ENCODE measurements at regions of chr5 and their contacts with region 1.

Region 1: GRCh38 chr5:80921026-80921425 is 39.1 kb upstream of the RASGRF2 start:
- DNase-seq: peak; percentile 35
- H3K4me3 Mint-ChIP-seq: no peak overlapping the region
- H3K27ac Mint-ChIP-seq: peak overlapping the region; percentile 22
- H3K4me1 Mint-ChIP-seq: peaks cover 29% of the 10 kb centered on the region
- H3K27me3 Mint-ChIP-seq: no peaks in the 10 kb centered on the region
- CTCF ChIP-seq: no peak

Region 2: GRCh38 chr5:80852331-80853245 is 68.4 kb before region 1 on chr5:
- CTCF ChIA-PET with region 1: no interaction called
- intact Hi-C with region 1: loop called (anchors 2 kb)
- DNase-seq: no peak
- H3K4me3 Mint-ChIP-seq: no peak overlapping the region
- H3K27ac Mint-ChIP-seq: peak overlapping the region; percentile 78
- H3K4me1 Mint-ChIP-seq: peaks cover 12% of the 10 kb centered on the region
- H3K27me3 Mint-ChIP-seq: no peaks in the 10 kb centered on the region
- CTCF ChIP-seq: no peak

Region 3: GRCh38 chr5:81251922-81252321 is 330.9 kb after region 1 on chr5:
- CTCF ChIA-PET with region 1: no interaction called
- intact Hi-C with region 1: no loop called
- DNase-seq: no peak
- H3K4me3 Mint-ChIP-seq: no peak overlapping the region
- H3K27ac Mint-ChIP-seq: no peak overlapping the region
- H3K4me1 Mint-ChIP-seq: peaks cover 20% of the 10 kb centered on the region
- H3K27me3 Mint-ChIP-seq: no peaks in the 10 kb centered on the region
- CTCF ChIP-seq: no peak

Measured in Calu3 (cell line).